Heart right ventricle (tissue), 16 donors: ENCODE measurements at regions of chr3 and their contacts with region 1.

Region 1: GRCh38 chr3:12158387-12159226 is at the start of gene TIMP4:
- DNase-seq: peak; percentile 34 to 69
- ATAC-seq: peak; percentile 61 to 90 (median 82)
- H3K4me3 ChIP-seq: peak within 1 kb of the TSS; percentile 33 to 82 (median 60)
- H3K27ac ChIP-seq: peak within 1 kb of the TSS; percentile 63 to 91 (median 78)
- H3K4me1 ChIP-seq: peaks cover 7 to 43% (median 33%) of the 10 kb centered on the region in 9 donors
- H3K27me3 ChIP-seq: peaks cover 0 to 10% (median 0%) of the 10 kb centered on the region in 7 donors
- CTCF ChIP-seq: no peak
- total RNA-seq, gene TIMP4: 2.7 to 39.4 (median 8.0) TPM

Region 2: GRCh38 chr3:11910971-11911531 is 247.6 kb before region 1 on chr3:
- intact Hi-C with region 1: loop called in 1 of 10 experiments (anchors 5 kb)
- DNase-seq: no peak
- ATAC-seq: peak in 4 of 8 donors; percentile 25 to 51 (median 37)
- H3K4me3 ChIP-seq: no peak overlapping the region
- H3K27ac ChIP-seq: no peak overlapping the region
- H3K4me1 ChIP-seq: no peaks in the 10 kb centered on the region
- H3K27me3 ChIP-seq: peaks cover 0 to 3% (median 0%) of the 10 kb centered on the region in 7 donors
- CTCF ChIP-seq: no peak

Region 3: GRCh38 chr3:12097971-12098370 is 60.6 kb before region 1 on chr3:
- intact Hi-C with region 1: no loop called
- DNase-seq: no peak
- ATAC-seq: no peak
- H3K4me3 ChIP-seq: no peak overlapping the region
- H3K27ac ChIP-seq: no peak overlapping the region
- H3K4me1 ChIP-seq: no peaks in the 10 kb centered on the region
- H3K27me3 ChIP-seq: peaks cover 0 to 6% (median 0%) of the 10 kb centered on the region in 7 donors
- CTCF ChIP-seq: no peak

Region 4: GRCh38 chr3:12143949-12144504 is 14.6 kb before region 1 on chr3:
- intact Hi-C with region 1: loop called in 3 of 10 experiments (anchors 2 kb)
- DNase-seq: peak; percentile 52 to 54
- ATAC-seq: peak; percentile 79 to 95 (median 86)
- H3K4me3 ChIP-seq: peak overlapping the region in 1 of 10 donors; percentile 18
- H3K27ac ChIP-seq: peak overlapping the region; percentile 60 to 89 (median 80)
- H3K4me1 ChIP-seq: peaks cover 6 to 68% (median 56%) of the 10 kb centered on the region in 9 donors
- H3K27me3 ChIP-seq: no peaks in the 10 kb centered on the region
- CTCF ChIP-seq: no peak

Region 5: GRCh38 chr3:12462159-12462947 is 303.7 kb after region 1 on chr3:
- intact Hi-C with region 1: no loop called
- DNase-seq: no peak
- ATAC-seq: peak; percentile 20 to 72 (median 49)
- H3K4me3 ChIP-seq: no peak overlapping the region
- H3K27ac ChIP-seq: peak overlapping the region in 7 of 10 donors; percentile 5 to 58 (median 37)
- H3K4me1 ChIP-seq: peaks cover 0 to 22% (median 15%) of the 10 kb centered on the region in 9 donors
- H3K27me3 ChIP-seq: no peaks in the 10 kb centered on the region
- CTCF ChIP-seq: no peak